Transverse colon (tissue), 4 donors: ENCODE measurements at regions of chr5 and their contacts with region 1.

Region 1: GRCh38 chr5:74640450-74640953 is at the start of gene ENC1:
- DNase-seq: peak; percentile 87
- H3K4me3 ChIP-seq: peak within 1 kb of the TSS; percentile 50 to 74 (median 56)
- H3K27ac ChIP-seq: peak within 1 kb of the TSS; percentile 90 to 93 (median 92)
- H3K4me1 ChIP-seq: peaks cover 3 to 38% (median 14%) of the 10 kb centered on the region in 4 donors
- H3K27me3 ChIP-seq: no peaks in the 10 kb centered on the region
- CTCF ChIP-seq: peak; percentile 49 to 94 (median 64)
- EP300 ChIP-seq: no peak
- POLR2A ChIP-seq: peak; percentile 90
- total RNA-seq, gene ENC1: 14.9 to 26.9 (median 22.0) TPM

Region 2: DNA sequence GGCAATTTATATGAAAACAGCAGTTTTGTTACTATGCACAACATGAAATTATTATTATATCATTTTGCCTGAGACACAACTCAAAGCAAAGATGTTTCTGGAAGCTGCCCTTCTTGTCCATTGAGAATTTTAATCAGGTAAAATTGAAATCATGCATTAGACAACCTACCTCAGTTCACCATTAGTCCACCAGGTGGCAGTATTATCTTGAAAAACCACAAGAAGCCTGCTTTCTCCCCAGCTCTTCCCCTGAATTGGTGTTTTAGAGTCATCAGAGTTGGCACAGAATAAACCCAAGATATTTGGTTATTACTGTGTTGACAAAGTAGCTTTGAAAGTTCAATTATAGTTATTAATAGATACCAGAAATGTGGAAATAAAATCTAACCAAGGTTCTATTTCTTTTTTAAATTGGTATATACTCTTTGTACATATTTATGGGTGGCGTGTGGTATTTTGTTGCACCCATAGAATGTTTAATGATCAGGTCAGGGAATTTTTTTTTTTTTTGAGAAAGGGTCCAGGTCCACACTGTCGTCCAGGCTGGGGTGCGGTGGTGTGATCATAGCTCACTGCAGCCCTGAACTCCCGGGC is 1049.3 kb before region 1 on chr5:
- in situ Hi-C with region 1: loop called in 1 of 4 experiments (anchors 10 kb)
- intact Hi-C with region 1: no loop called
- DNase-seq: peak; percentile 17
- H3K4me3 ChIP-seq: no peak overlapping the region
- H3K27ac ChIP-seq: no peak overlapping the region
- H3K4me1 ChIP-seq: no peaks in the 10 kb centered on the region
- H3K27me3 ChIP-seq: no peaks in the 10 kb centered on the region
- CTCF ChIP-seq: peak; percentile 86 to 90 (median 89)
- EP300 ChIP-seq: no peak
- POLR2A ChIP-seq: no peak

Region 3: DNA sequence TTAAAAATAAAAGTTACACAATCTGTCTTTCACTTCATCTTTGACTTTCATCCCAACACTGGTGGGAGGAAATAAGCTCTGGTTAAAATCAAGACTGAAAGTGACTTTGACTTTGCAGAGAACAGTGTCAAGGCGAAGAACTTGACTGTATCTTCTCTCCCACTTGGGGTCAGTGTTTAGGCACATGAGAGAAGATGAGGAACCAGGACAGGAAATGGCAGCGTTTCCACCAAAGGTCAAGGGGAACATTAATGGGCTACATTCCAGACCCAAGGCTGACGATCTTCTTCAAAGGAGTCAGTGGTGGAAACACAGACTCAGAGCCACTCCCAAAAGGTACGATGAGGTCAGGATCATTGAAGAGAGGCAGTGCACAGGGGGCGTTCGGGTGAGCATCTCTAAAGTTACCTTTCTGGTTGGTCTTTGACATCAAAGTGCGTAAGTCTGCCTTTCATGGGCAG is 605.0 kb before region 1 on chr5:
- in situ Hi-C with region 1: loop called in 3 of 4 experiments (anchors 10 to 25 kb)
- intact Hi-C with region 1: loop called (anchors 5 kb)
- DNase-seq: no peak
- H3K4me3 ChIP-seq: no peak overlapping the region
- H3K27ac ChIP-seq: no peak overlapping the region
- H3K4me1 ChIP-seq: peaks cover 0 to 9% (median 6%) of the 10 kb centered on the region in 4 donors
- H3K27me3 ChIP-seq: no peaks in the 10 kb centered on the region
- CTCF ChIP-seq: peak in 3 of 5 experiments; percentile 20 to 31 (median 22)
- EP300 ChIP-seq: no peak
- POLR2A ChIP-seq: no peak

Region 4: GRCh38 chr5:74056789-74057164 is 583.7 kb before region 1 on chr5:
- in situ Hi-C with region 1: loop called in 1 of 4 experiments (anchors 25 kb)
- intact Hi-C with region 1: no loop called
- DNase-seq: peak; percentile 36
- H3K4me3 ChIP-seq: no peak overlapping the region
- H3K27ac ChIP-seq: no peak overlapping the region
- H3K4me1 ChIP-seq: no peaks in the 10 kb centered on the region
- H3K27me3 ChIP-seq: no peaks in the 10 kb centered on the region
- CTCF ChIP-seq: peak in 4 of 5 experiments; percentile 27 to 49 (median 34)
- EP300 ChIP-seq: no peak
- POLR2A ChIP-seq: no peak

Region 5: DNA sequence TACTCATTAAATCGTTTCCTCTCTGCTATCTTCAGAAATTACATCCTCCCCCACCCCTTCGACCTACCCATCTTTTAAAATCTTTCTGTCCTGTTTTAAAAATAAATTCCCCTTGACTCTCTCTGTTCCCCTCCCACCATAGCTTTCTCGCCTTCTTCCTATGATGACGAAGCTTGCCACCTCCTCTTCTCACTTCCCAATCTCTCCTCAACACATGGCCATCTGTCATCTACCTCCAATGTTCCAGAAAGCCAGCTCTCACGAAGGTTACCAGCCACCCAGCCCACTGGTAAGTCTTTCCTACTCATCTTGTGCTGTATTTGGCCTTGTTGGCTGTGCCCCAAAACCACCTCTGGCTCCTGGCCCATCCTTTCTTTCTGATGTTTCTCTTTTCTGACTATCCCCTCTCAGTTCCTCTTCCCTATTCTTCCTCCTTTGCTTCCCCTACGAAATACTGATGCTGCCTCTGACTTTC is 346.2 kb before region 1 on chr5:
- in situ Hi-C with region 1: loop called in 1 of 4 experiments (anchors 25 kb)
- intact Hi-C with region 1: no loop called
- DNase-seq: no peak
- H3K4me3 ChIP-seq: no peak overlapping the region
- H3K27ac ChIP-seq: no peak overlapping the region
- H3K4me1 ChIP-seq: peaks cover 0 to 8% (median 0%) of the 10 kb centered on the region in 4 donors
- H3K27me3 ChIP-seq: no peaks in the 10 kb centered on the region
- CTCF ChIP-seq: no peak
- EP300 ChIP-seq: no peak
- POLR2A ChIP-seq: no peak

Region 6: GRCh38 chr5:74394916-74395781 is 245.4 kb before region 1 on chr5:
- in situ Hi-C with region 1: loop called in 3 of 4 experiments (anchors 10 to 25 kb)
- intact Hi-C with region 1: no loop called
- DNase-seq: no peak
- H3K4me3 ChIP-seq: no peak overlapping the region
- H3K27ac ChIP-seq: no peak overlapping the region
- H3K4me1 ChIP-seq: peaks cover 0 to 3% (median 0%) of the 10 kb centered on the region in 4 donors
- H3K27me3 ChIP-seq: no peaks in the 10 kb centered on the region
- CTCF ChIP-seq: no peak
- EP300 ChIP-seq: no peak
- POLR2A ChIP-seq: no peak

Region 7: DNA sequence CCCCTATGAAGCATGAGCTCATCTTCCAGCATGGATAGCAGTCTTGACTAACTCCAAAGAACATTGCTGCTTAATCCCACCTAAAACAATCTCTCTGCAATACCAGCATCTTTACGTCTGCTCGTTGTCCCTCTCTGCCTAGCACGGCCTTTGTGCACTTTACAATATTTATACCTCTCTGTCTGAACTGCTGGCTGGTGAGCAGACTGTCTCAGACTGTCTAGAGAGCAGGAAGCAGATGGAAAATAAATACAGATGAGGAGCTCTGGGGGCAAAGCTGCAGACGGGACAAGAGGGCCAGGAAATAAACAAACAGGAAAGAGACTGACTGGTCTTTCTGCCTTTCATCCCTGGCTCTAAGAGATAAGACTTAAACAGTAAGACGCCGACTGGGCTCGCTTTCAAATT is 224.8 kb before region 1 on chr5:
- in situ Hi-C with region 1: loop called in 2 of 4 experiments (anchors 25 kb)
- intact Hi-C with region 1: no loop called
- DNase-seq: peak; percentile 24
- H3K4me3 ChIP-seq: no peak overlapping the region
- H3K27ac ChIP-seq: peak overlapping the region in 3 of 4 donors; percentile 8 to 45 (median 29)
- H3K4me1 ChIP-seq: peaks cover 0 to 64% (median 16%) of the 10 kb centered on the region in 4 donors
- H3K27me3 ChIP-seq: no peaks in the 10 kb centered on the region
- CTCF ChIP-seq: no peak
- EP300 ChIP-seq: no peak
- POLR2A ChIP-seq: no peak

Region 8: GRCh38 chr5:74476046-74476818 is 164.3 kb before region 1 on chr5:
- in situ Hi-C with region 1: no loop called
- intact Hi-C with region 1: no loop called
- DNase-seq: no peak
- H3K4me3 ChIP-seq: no peak overlapping the region
- H3K27ac ChIP-seq: no peak overlapping the region
- H3K4me1 ChIP-seq: no peaks in the 10 kb centered on the region
- H3K27me3 ChIP-seq: no peaks in the 10 kb centered on the region
- CTCF ChIP-seq: no peak
- EP300 ChIP-seq: no peak
- POLR2A ChIP-seq: no peak